ENCODE measurements at regions of chr14 and their contacts with region 1.

Region 1: DNA sequence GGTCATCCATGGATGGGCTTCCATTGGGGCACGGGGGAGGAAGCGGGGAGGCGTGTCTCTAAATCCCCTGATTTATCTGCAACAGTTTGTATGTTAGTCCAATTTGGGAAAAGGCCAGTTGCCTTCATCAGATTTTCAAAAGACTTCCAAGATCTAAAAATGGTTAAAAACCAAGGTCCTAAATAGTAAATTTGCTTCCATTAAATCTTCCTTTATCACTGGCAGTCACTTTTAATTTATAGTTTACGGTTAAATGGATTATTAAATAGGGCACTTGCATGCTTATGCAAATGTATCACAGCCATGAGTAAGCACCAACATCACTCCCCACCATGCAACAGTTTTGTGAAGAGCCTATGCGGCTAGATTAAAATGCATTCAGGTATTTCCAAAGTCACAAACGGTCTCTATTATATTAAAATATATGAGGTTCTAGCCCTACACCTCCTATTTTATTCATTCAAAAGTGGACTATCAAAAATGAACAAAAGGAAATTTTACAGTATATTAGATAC is 108.2 kb upstream of the GPHB5 start:
- DNase-seq: no peak

Region 2: DNA sequence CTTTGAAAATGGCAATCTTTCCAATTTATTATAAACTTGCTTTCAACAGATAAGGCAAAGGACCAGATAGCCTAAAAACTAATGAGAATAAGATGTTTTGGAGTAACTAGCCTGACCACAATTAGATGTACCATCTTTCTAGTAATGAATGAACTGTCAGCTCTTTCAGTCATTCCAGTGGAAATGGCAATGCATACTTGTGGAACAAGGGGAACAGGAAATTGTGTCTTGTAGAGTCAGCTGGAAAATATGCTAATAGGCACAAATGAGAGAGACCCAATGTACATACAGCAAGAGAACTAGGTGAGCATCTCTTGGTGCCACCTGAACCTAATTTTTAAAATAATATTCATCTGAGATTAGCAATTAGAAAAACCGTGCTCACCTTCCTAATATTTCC is 32.1 kb before region 1 on chr14:
- CTCF ChIA-PET with region 1: no interaction called
- POLR2A ChIA-PET with region 1: no interaction called
- DNase-seq: no peak

Region 3: GRCh38 chr14:63493246-63493645 is 66.4 kb after region 1 on chr14:
- CTCF ChIA-PET with region 1: interaction called, 10 read pairs
- POLR2A ChIA-PET with region 1: no interaction called
- DNase-seq: peak; percentile 49

Measured in HEK293T (cell line).